BJ (cell line): ENCODE measurements at regions of chr6 and their contacts with region 1.

Region 1: DNA sequence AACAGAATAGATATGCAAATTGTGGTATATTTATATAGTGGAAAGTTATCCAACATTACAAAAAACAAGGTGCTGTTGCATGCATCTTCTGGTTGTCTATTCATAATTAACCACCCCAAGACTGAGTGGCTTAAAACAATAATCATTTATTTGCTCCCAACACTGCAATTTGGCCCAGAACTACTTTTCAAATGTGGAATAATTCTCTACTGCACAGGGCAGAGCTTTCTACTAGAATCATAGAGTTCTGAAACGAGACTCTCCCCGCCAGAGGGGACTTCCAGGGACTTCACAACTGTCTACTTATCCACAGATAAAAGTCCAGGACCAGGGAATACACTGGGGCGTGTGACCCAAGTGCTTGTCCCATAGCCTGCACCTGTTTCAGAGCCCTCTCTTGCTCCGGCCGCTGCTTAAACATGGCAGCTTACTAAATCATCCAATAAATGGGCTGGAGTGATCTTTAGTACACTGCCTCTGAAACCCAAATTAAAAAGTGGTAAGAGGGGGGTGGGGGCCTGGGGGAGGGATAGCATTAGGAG is 9.0 kb upstream of the RAB44 start:
- DNase-seq: no peak
- H3K4me3 ChIP-seq: no peak overlapping the region
- H3K27me3 ChIP-seq: no peaks in the 10 kb centered on the region
- CTCF ChIP-seq: no peak

Region 2: DNA sequence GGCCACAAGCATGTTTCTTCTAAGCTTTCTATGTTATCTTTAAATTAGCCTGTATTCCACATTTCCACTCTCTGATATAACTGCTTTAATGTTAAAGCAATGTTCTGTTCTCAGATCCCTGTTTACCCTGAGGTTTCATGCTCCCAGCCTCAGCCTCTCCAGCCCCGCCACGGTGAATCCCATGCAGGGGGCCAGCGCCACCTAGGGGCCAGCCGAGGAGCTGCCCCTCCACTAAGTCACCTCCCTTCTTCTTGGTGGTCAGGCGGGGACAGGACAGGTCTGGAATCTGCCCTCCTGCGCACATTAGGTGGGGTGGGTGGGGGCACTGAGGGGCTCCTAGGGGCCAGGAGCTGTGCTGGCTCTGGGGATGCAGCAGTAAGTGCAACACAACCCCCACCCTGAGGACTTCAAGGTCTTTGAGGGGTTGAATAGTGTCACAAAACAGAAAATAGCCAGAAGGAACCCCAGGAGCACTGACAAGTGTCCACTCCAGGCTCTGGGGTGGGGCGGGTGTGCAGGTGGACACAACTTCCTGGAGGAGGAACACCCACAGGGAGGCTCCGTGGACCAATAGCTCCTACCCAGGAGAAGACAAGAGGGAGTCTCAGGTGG is 70.6 kb after region 1 on chr6:
- CTCF ChIA-PET with region 1: interaction called, 6 read pairs
- POLR2A ChIA-PET with region 1: interaction called, 10 read pairs
- DNase-seq: no peak
- H3K4me3 ChIP-seq: no peak overlapping the region
- H3K27me3 ChIP-seq: peaks cover 2% of the 10 kb centered on the region
- CTCF ChIP-seq: peak; percentile 100